Posterior vena cava (tissue), 2 donors: ENCODE measurements at regions of chr1 and their contacts with region 1.

Region 1: GRCh38 chr1:242132121-242132817 is 133.4 kb upstream of the MAP1LC3C start:
- DNase-seq: no peak

Region 2: DNA sequence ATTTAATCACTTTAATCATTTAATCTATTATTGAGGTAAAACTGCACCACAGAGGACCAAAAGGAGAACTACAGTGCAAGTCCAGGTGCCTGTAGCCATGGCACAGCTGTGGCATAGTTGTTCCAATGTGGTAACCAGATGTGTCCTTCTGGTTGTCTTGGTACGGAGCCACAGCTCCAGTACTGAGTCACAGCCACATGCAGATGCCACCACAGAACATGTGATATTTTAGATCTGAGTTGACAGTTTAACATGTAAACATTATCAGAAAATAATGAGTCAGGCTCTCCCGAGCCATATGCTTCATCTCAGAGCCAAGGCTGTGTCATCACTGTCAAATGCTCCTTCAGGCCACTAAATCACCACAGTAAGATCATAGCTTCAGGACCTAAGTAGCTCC is 718.9 kb before region 1 on chr1:
- intact Hi-C with region 1: loop called in 1 of 2 experiments (anchors 5 kb)
- DNase-seq: no peak

Region 3: GRCh38 chr1:242033447-242033846 is 98.8 kb before region 1 on chr1:
- intact Hi-C with region 1: no loop called
- DNase-seq: no peak